ENCODE measurements at regions of chr7 and their contacts with region 1.

Region 1: GRCh38 chr7:120857588-120858573 is at the start of gene TSPAN12:
- DNase-seq: peak; percentile 84 to 85
- H3K4me3 ChIP-seq: peak within 1 kb of the TSS; percentile 96
- H3K4me3 Mint-ChIP-seq: peak within 1 kb of the TSS; percentile 99
- H3K27ac Mint-ChIP-seq: peak within 1 kb of the TSS; percentile 94
- H3K4me1 ChIP-seq: peaks cover 10% of the 10 kb centered on the region
- H3K4me1 Mint-ChIP-seq: peaks cover 7% of the 10 kb centered on the region
- H3K27me3 ChIP-seq: no peaks in the 10 kb centered on the region
- H3K27me3 Mint-ChIP-seq: peaks cover 2% of the 10 kb centered on the region
- CTCF ChIP-seq: peak; percentile 53 to 59
- total RNA-seq, gene TSPAN12: 2.9 and 4.1 TPM in 2 replicates

Region 2: DNA sequence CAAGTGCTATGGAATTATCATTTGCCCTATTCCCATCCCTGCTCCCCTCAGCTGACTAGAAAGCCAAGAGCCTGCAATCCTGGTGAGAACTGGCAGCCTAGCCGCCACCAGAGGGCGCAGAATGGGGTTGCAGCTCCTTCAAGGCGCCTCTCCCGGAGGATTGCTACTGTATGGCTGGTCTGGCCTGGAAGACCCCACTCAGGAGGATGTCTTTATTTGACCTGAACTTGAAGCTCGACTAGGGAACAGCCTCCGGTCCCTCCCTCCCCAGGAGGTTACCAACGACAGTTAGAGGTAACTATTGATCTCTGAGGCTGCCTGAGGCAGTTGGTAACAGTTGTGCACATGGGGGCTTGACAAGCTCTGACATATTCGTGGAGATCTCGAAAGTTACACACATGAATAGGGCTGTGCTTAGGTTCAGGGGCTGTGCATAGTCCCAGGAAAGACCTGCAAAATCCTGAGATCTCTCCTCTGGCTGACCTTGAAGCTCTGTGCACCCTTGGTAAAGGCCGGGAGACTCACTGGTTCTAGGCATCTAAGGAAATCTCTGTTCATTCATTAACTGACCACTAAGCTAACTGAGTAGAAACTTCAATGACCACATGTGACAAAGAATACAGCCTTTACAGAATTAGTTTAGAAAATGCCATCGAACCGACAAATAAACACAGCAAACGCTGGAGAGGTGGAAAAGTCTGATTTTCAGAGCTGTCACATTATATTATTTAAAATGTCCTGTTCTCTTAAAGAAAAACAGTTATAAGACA is 65.6 kb before region 1 on chr7:
- CTCF ChIA-PET with region 1: interaction called, 7 read pairs
- POLR2A ChIA-PET with region 1: no interaction called
- intact Hi-C with region 1: loop called (anchors 2 kb)
- DNase-seq: peak; percentile 77 to 79
- H3K4me3 ChIP-seq: no peak overlapping the region
- H3K4me3 Mint-ChIP-seq: no peak overlapping the region
- H3K27ac Mint-ChIP-seq: no peak overlapping the region
- H3K4me1 ChIP-seq: no peaks in the 10 kb centered on the region
- H3K4me1 Mint-ChIP-seq: no peaks in the 10 kb centered on the region
- H3K27me3 ChIP-seq: no peaks in the 10 kb centered on the region
- H3K27me3 Mint-ChIP-seq: peaks cover 4% of the 10 kb centered on the region
- CTCF ChIP-seq: peak; percentile 89 to 96

Region 3: DNA sequence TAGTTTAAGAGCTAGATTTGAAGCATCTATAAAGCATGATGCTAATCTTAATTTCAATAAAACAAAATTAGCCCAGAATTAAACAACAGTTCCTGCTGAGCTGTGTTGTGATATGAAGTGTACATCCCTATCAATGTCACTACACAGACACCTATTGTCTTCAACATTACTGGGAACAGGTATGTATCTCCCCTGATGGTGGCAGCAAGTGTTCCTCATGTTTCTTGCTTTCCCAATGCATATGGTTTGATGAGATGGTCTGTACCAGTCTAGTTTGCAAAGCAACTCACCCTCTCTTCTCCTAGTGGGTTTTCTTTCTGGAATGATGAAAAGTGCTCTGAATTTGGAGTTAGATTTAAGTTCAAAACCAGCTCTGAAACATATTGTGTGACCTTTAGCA is 38.0 kb before region 1 on chr7:
- CTCF ChIA-PET with region 1: no interaction called
- POLR2A ChIA-PET with region 1: no interaction called
- intact Hi-C with region 1: loop called (anchors 5 kb)
- DNase-seq: peak in 1 of 2 experiments; percentile 5
- H3K4me3 ChIP-seq: no peak overlapping the region
- H3K4me3 Mint-ChIP-seq: no peak overlapping the region
- H3K27ac Mint-ChIP-seq: no peak overlapping the region
- H3K4me1 ChIP-seq: no peaks in the 10 kb centered on the region
- H3K4me1 Mint-ChIP-seq: no peaks in the 10 kb centered on the region
- H3K27me3 ChIP-seq: no peaks in the 10 kb centered on the region
- H3K27me3 Mint-ChIP-seq: peaks cover 3% of the 10 kb centered on the region
- CTCF ChIP-seq: peak in 1 of 2 experiments; percentile 9

Region 4: GRCh38 chr7:120842121-120842621 is 15.7 kb before region 1 on chr7:
- CTCF ChIA-PET with region 1: no interaction called
- POLR2A ChIA-PET with region 1: no interaction called
- intact Hi-C with region 1: loop called (anchors 2 kb)
- DNase-seq: no peak
- H3K4me3 ChIP-seq: no peak overlapping the region
- H3K4me3 Mint-ChIP-seq: no peak overlapping the region
- H3K27ac Mint-ChIP-seq: no peak overlapping the region
- H3K4me1 ChIP-seq: no peaks in the 10 kb centered on the region
- H3K4me1 Mint-ChIP-seq: peaks cover 8% of the 10 kb centered on the region
- H3K27me3 ChIP-seq: no peaks in the 10 kb centered on the region
- H3K27me3 Mint-ChIP-seq: no peaks in the 10 kb centered on the region
- CTCF ChIP-seq: no peak

Region 5: DNA sequence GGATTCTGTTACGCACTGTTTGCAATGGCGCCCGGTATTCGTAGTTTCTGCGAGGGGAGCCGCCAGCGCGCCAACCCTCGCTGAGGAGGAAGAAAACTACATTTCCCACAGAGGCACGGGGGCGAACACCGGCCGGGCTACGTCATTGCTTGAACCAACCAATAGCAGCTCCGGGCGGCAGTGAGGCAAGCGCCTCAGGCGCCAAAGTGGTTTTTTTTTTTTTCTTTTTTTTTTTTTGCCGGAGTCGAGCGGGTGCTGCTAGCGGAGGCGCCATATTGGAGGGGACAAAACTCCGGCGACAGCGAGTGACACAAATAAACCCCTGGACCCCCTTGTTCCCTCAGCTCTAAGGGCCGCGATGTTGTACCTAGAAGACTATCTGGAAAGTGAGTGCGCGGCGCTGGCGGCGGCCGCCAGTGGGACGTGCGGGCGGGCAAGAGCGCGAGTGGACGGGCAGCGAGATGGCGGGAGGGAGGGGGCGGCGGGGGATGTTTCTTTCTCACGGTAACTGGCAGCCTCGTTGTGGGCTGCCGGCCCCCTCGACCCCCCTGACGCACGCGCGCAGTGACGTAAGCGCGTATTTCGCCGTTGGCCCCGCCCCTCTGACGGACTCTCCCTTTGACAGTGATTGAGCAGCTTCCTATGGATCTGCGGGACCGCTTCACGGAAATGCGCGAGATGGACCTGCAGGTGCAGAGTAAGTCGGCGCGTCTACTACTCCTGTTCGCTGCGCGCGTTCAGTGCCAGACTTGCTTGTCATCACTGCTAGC is 92.8 kb after region 1 on chr7 and contains the start of gene ING3:
- CTCF ChIA-PET with region 1: interaction called, 4 read pairs
- POLR2A ChIA-PET with region 1: interaction called, 3 read pairs
- intact Hi-C with region 1: loop called (anchors 1 kb)
- DNase-seq: peak; percentile 97
- H3K4me3 ChIP-seq: peak within 1 kb of the TSS; percentile 85
- H3K4me3 Mint-ChIP-seq: peak within 1 kb of the TSS; percentile 96
- H3K27ac Mint-ChIP-seq: peak within 1 kb of the TSS; percentile 100
- H3K4me1 ChIP-seq: no peaks in the 10 kb centered on the region
- H3K4me1 Mint-ChIP-seq: peaks cover 9% of the 10 kb centered on the region
- H3K27me3 ChIP-seq: no peaks in the 10 kb centered on the region; the same call in 1 of the 2 replicates
- H3K27me3 Mint-ChIP-seq: peaks cover 4% of the 10 kb centered on the region
- CTCF ChIP-seq: no peak
- total RNA-seq, gene ING3: 13.7 and 14.6 TPM in 2 replicates

Measured in Caco-2 (cell line).